ENCODE measurements at regions of chr12 and their contacts with region 1.

Region 1: GRCh38 chr12:54701940-54702592 is 53.9 kb upstream of the DCD start:
- DNase-seq: peak; percentile 46
- ATAC-seq: peak; percentile 64
- H3K4me3 Mint-ChIP-seq: no peak overlapping the region
- H3K27ac Mint-ChIP-seq: no peak overlapping the region
- H3K4me1 Mint-ChIP-seq: no peaks in the 10 kb centered on the region
- H3K27me3 Mint-ChIP-seq: peaks cover 16% of the 10 kb centered on the region

Region 2: DNA sequence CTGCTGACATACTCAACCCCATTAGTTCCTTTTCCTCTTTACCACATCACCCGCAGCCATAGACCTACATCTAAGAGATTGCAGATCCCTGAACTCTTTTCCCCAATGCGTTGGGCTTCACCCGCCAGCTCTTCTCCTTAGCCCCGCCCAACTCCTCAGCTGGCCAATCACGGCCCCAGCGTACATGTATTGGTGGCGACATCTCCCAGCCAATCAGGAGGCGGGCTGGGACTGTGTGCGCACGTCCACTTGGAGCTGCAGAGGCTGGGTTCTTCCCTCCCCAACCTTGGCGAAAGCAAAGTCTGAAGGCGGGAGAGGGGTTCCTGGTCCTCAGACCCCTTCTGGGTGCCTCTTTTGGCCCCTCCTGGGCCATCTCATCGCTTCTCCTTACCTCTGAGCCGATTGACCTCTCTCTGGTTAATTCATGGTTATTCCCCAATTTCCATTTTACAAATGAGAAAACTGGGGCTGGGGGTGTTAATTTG is 141.7 kb before region 1 on chr12:
- CTCF ChIA-PET with region 1: no interaction called
- POLR2A ChIA-PET with region 1: no interaction called
- DNase-seq: peak; percentile 90
- ATAC-seq: peak; percentile 100
- H3K4me3 Mint-ChIP-seq: peak overlapping the region; percentile 67
- H3K27ac Mint-ChIP-seq: peak overlapping the region; percentile 78
- H3K4me1 Mint-ChIP-seq: peaks cover 27% of the 10 kb centered on the region
- H3K27me3 Mint-ChIP-seq: no peaks in the 10 kb centered on the region

Region 3: DNA sequence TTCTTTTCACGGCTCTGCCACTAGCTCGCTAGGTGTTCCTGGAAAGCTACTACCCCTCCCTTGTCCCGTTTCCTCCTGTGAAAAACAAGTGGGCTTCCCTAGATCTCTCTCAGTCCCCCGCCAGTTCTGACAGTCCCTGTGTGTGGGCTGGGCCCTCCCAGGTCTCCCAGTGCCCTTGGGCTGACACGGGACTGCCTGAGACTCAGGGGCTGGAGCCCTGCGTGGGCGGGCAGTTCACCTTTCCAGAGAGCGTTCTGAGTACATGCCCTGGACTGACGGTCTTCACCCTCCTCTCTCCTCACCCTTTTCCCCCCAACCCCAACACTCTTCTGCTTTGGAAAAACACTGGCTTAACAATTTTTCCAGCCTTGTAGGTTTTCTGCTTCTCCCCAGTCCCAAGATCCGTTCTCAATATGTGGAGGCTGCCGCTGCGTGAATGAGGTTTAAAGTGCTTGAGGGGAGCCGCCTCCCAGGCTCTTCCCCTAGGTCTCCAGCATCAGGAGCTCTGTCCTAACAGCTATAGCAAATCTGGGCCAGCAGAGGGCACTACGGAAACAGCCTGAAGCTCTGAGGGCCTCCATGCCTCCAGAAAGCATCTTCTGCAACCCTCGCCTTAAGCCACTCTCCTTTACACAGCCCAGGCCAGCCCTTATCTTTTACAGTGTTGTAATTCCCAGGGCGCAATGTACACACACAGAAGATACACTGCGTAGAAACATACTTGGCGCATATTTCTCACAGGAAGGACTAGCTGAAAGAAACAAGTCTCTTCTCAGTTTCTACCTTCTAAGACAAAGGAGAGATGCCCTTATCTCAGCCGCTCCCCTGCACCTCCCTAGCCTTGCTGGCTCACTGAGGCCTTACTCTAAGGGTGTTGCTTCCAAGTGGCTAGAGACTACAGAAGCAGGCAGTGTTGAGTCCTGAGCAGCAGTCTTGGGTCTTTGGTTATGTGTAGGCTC is 43.5 kb before region 1 on chr12:
- CTCF ChIA-PET with region 1: interaction called, 13 read pairs
- POLR2A ChIA-PET with region 1: no interaction called
- DNase-seq: peak; percentile 63
- ATAC-seq: peak; percentile 81
- H3K4me3 Mint-ChIP-seq: no peak overlapping the region
- H3K27ac Mint-ChIP-seq: no peak overlapping the region
- H3K4me1 Mint-ChIP-seq: no peaks in the 10 kb centered on the region
- H3K27me3 Mint-ChIP-seq: peaks cover 12% of the 10 kb centered on the region

Region 4: DNA sequence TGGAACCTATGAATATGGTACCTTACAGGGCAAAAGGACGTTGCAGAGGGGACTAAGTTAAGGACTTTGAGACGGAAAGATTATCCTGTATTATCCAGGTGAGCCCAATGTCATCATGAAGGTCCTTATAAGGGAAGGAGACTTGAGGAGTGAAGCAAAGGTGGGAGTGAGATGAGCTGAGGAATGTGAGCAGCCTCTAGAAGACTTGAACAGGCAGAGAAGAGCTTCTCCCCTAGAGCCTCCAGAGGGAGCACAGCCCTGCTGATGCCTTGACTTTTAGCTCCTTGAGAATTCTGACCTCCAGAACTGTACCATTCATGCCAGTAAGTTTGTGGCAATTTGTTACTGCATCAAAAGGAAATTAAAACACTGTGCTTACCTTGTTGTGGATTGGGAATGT is 12.1 kb before region 1 on chr12:
- CTCF ChIA-PET with region 1: interaction called, 10 read pairs
- POLR2A ChIA-PET with region 1: interaction called, 5 read pairs
- DNase-seq: no peak
- ATAC-seq: no peak
- H3K4me3 Mint-ChIP-seq: no peak overlapping the region
- H3K27ac Mint-ChIP-seq: no peak overlapping the region
- H3K4me1 Mint-ChIP-seq: no peaks in the 10 kb centered on the region
- H3K27me3 Mint-ChIP-seq: peaks cover 49% of the 10 kb centered on the region

Region 5: GRCh38 chr12:54723379-54724256 is 21.6 kb after region 1 on chr12:
- CTCF ChIA-PET with region 1: interaction called, 15 read pairs
- POLR2A ChIA-PET with region 1: no interaction called
- DNase-seq: peak; percentile 58
- ATAC-seq: peak; percentile 57
- H3K4me3 Mint-ChIP-seq: no peak overlapping the region
- H3K27ac Mint-ChIP-seq: no peak overlapping the region
- H3K4me1 Mint-ChIP-seq: peaks cover 10% of the 10 kb centered on the region
- H3K27me3 Mint-ChIP-seq: peaks cover 20% of the 10 kb centered on the region

Region 6: DNA sequence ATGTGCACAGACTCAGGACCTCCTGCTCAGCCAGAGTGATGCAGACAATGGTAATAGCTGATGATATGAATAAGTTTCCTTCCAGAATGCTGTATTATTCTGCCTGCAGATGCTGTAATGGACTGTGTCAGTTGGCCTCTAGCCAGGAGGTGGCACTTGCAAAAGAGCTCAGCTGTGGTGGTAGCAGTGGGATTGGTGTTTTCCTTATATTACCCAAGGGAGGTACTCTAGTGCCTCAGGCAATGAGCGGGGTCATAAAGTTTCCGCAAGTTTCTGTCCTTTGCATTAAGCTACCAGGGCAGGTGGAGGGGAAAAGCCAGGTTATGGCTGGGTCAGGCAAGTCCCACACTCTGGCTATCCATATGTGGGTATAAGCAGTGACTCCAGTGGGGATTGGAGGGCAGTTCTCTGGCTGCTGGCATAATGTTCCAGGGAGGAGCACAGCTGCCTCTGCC is 138.3 kb after region 1 on chr12:
- CTCF ChIA-PET with region 1: no interaction called
- POLR2A ChIA-PET with region 1: no interaction called
- DNase-seq: no peak
- ATAC-seq: no peak
- H3K4me3 Mint-ChIP-seq: no peak overlapping the region
- H3K27ac Mint-ChIP-seq: no peak overlapping the region
- H3K4me1 Mint-ChIP-seq: no peaks in the 10 kb centered on the region
- H3K27me3 Mint-ChIP-seq: peaks cover 13% of the 10 kb centered on the region

Region 7: GRCh38 chr12:54917001-54917488 is 215.0 kb after region 1 on chr12:
- CTCF ChIA-PET with region 1: no interaction called
- POLR2A ChIA-PET with region 1: no interaction called
- DNase-seq: no peak
- ATAC-seq: no peak
- H3K4me3 Mint-ChIP-seq: no peak overlapping the region
- H3K27ac Mint-ChIP-seq: no peak overlapping the region
- H3K4me1 Mint-ChIP-seq: no peaks in the 10 kb centered on the region
- H3K27me3 Mint-ChIP-seq: no peaks in the 10 kb centered on the region

Measured in activated CD8-positive, alpha-beta T cell treated with anti-CD3 and anti-CD28 coated beads, Interleukin-2, amount 10 ng/mL, durations not matched to agents 7 days and 5 days (primary cell).